ENCODE measurements at regions of chr18 and their contacts with region 1.

Region 1: GRCh38 chr18:42114310-42114943 is 159.4 kb downstream of the PIK3C3 start:
- DNase-seq: peak; percentile 74
- H3K4me3 ChIP-seq: no peak overlapping the region
- H3K27ac ChIP-seq: peak overlapping the region in 2 of 4 donors; percentile 18 to 20
- H3K4me1 ChIP-seq: peaks cover 0 to 14% (median 4%) of the 10 kb centered on the region in 4 donors
- H3K27me3 ChIP-seq: no peaks in the 10 kb centered on the region
- CTCF ChIP-seq: peak in 3 of 4 experiments; percentile 65 to 89 (median 81)
- EP300 ChIP-seq: no peak
- POLR2A ChIP-seq: no peak

Region 2: DNA sequence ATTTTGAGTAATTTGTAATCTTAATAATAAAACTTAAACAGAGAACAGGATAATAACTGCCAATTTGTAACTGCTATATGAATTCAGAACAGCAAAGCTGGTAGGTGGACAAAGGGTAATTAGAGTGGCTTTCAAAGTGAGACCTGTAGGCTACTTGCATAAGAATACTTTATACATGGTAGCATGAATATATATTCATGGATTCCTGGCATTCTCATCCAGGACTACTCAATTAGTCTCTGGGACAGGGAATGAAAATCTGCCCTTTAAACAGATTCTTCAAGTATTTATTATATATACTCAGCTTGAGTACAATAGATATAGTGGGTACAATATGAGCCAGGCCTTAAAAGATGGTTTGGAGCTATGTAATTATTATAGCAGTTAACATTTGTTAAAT is 260.5 kb after region 1 on chr18:
- intact Hi-C with region 1: no loop called
- DNase-seq: no peak
- H3K4me3 ChIP-seq: no peak overlapping the region
- H3K27ac ChIP-seq: no peak overlapping the region
- H3K4me1 ChIP-seq: no peaks in the 10 kb centered on the region
- H3K27me3 ChIP-seq: no peaks in the 10 kb centered on the region
- CTCF ChIP-seq: no peak
- EP300 ChIP-seq: no peak
- POLR2A ChIP-seq: no peak

Region 3: DNA sequence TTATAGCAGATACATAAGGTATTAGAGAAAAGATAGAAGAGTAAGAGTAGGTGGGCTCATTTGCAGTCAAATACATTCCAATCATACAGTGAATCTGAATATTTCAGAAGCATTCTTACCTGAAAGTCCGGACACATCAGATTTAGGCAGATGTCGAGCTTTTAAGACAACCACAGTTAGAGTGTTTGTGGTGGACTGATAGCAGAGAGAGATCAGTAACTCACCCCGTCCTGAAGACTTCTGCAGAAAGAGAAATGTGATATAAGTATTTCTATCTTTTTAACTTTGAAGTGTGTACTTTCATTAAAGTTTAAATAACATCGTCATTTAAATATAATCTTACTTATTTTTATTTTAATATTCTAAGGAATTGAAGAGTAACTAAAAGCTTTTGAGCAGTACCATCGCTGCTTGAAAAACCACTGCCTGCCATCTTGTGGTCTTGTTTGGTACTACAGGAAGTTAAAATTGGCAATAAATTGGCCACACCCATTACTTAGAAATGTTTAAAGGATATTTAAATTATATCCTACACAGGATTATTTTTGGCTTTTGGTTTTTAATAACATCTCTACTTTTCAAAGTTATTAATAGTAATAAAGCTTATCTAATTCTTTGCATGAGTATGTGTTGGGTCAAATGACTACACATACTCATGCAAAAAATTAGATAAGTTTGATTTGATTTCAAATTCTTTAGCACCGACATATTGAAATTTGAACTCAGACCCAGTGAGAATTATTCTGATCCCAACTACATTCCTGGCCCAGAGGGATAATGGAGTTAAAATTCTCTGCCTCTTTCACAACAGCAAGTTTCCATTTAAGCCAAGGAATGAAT is 1157.4 kb after region 1 on chr18:
- intact Hi-C with region 1: loop called (anchors 5 kb)
- DNase-seq: no peak
- H3K4me3 ChIP-seq: no peak overlapping the region
- H3K27ac ChIP-seq: no peak overlapping the region
- H3K4me1 ChIP-seq: no peaks in the 10 kb centered on the region
- H3K27me3 ChIP-seq: peaks cover 0 to 6% (median 0%) of the 10 kb centered on the region in 3 donors
- CTCF ChIP-seq: peak in 3 of 4 experiments; percentile 40 to 67 (median 52)
- EP300 ChIP-seq: no peak
- POLR2A ChIP-seq: no peak

Region 4: GRCh38 chr18:43563780-43564179 is 1449.4 kb after region 1 on chr18:
- intact Hi-C with region 1: loop called (anchors 10 kb)
- DNase-seq: no peak
- H3K4me3 ChIP-seq: no peak overlapping the region
- H3K27ac ChIP-seq: no peak overlapping the region
- H3K4me1 ChIP-seq: no peaks in the 10 kb centered on the region
- H3K27me3 ChIP-seq: no peaks in the 10 kb centered on the region
- CTCF ChIP-seq: peak in 3 of 4 experiments; percentile 20 to 39 (median 22)
- EP300 ChIP-seq: no peak
- POLR2A ChIP-seq: no peak